Endothelial cell of umbilical vein (primary cell): ENCODE measurements at regions of chr13 and their contacts with region 1.

Region 1: GRCh38 chr13:59391696-59392095 is 772.0 kb downstream of the DIAPH3 start:
- DNase-seq: peak; percentile 78
- H3K4me3 ChIP-seq: no peak overlapping the region
- H3K27ac ChIP-seq: no peak overlapping the region
- H3K4me1 ChIP-seq: peaks cover 15% of the 10 kb centered on the region
- H3K27me3 ChIP-seq: no peaks in the 10 kb centered on the region
- CTCF ChIP-seq: peak; percentile 76
- POLR2A ChIP-seq: no peak

Region 2: DNA sequence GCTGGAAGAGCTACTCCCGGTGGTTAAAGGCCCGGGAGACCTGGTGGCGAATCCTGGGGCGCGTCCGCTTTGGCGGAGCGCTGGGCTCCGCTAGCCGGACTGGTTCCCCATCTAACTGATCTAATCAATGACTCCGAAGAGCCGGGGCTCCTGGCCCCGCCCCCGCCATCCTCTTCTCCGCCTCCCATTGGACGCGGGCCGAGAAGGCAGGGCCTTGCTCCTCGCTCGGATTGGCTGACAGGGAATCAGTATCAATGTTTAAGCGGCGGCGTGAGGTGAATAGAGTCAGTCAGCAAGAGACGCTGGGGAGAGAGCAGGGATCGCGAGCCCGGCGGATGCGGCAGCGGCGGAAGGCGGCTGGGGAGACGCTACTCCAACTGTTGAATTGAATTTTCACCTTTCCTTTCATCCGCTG is 1761.9 kb before region 1 on chr13:
- CTCF ChIA-PET with region 1: no interaction called
- POLR2A ChIA-PET with region 1: no interaction called
- dilution Hi-C with region 1: no loop called
- intact Hi-C with region 1: loop called (anchors 10 kb)
- DNase-seq: peak; percentile 95
- H3K4me3 ChIP-seq: peak overlapping the region; percentile 46 to 75 (median 68)
- H3K27ac ChIP-seq: no peak overlapping the region
- H3K4me1 ChIP-seq: peaks cover 24% of the 10 kb centered on the region
- H3K27me3 ChIP-seq: peaks cover 5 to 11% of the 10 kb centered on the region in 2 experiments
- CTCF ChIP-seq: no peak
- POLR2A ChIP-seq: peak; percentile 84

Region 3: DNA sequence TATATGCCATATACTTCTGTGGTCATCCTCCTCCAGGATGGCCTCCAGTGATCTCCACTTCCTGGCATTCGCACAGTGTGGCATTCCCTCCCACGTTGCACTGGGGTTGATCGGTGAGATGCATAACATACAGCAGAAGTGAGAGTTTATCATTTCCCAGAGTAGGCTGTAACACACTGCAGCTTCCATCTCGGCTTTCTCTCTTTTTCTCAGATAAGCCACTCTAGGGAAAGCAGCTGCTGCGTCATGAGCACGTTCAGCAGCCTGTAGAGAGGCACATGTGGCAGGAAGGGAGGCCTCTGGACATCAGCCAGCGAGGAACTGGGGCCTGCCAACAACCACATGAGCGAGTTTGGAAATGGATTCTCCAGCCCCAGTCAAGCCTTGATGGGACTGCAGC is 35.1 kb before region 1 on chr13:
- CTCF ChIA-PET with region 1: interaction called, 10 read pairs
- POLR2A ChIA-PET with region 1: no interaction called
- dilution Hi-C with region 1: no loop called
- intact Hi-C with region 1: no loop called
- DNase-seq: peak; percentile 97
- H3K4me3 ChIP-seq: no peak overlapping the region
- H3K27ac ChIP-seq: peak overlapping the region; percentile 22
- H3K4me1 ChIP-seq: peaks cover 26% of the 10 kb centered on the region
- H3K27me3 ChIP-seq: peaks cover 0 to 1% of the 10 kb centered on the region in 2 experiments
- CTCF ChIP-seq: no peak
- POLR2A ChIP-seq: peak; percentile 42

Region 4: GRCh38 chr13:59371229-59371628 is 20.5 kb before region 1 on chr13:
- CTCF ChIA-PET with region 1: no interaction called
- POLR2A ChIA-PET with region 1: no interaction called
- dilution Hi-C with region 1: no loop called
- intact Hi-C with region 1: no loop called
- DNase-seq: no peak
- H3K4me3 ChIP-seq: no peak overlapping the region
- H3K27ac ChIP-seq: no peak overlapping the region
- H3K4me1 ChIP-seq: peaks cover 6% of the 10 kb centered on the region
- H3K27me3 ChIP-seq: no peaks in the 10 kb centered on the region
- CTCF ChIP-seq: no peak
- POLR2A ChIP-seq: no peak

Region 5: GRCh38 chr13:59425211-59425721 is 33.6 kb after region 1 on chr13:
- CTCF ChIA-PET with region 1: no interaction called
- POLR2A ChIA-PET with region 1: no interaction called
- dilution Hi-C with region 1: no loop called
- intact Hi-C with region 1: no loop called
- DNase-seq: no peak
- H3K4me3 ChIP-seq: no peak overlapping the region
- H3K27ac ChIP-seq: no peak overlapping the region
- H3K4me1 ChIP-seq: no peaks in the 10 kb centered on the region
- H3K27me3 ChIP-seq: peaks cover 0 to 1% of the 10 kb centered on the region in 2 experiments
- CTCF ChIP-seq: no peak
- POLR2A ChIP-seq: no peak

Region 6: DNA sequence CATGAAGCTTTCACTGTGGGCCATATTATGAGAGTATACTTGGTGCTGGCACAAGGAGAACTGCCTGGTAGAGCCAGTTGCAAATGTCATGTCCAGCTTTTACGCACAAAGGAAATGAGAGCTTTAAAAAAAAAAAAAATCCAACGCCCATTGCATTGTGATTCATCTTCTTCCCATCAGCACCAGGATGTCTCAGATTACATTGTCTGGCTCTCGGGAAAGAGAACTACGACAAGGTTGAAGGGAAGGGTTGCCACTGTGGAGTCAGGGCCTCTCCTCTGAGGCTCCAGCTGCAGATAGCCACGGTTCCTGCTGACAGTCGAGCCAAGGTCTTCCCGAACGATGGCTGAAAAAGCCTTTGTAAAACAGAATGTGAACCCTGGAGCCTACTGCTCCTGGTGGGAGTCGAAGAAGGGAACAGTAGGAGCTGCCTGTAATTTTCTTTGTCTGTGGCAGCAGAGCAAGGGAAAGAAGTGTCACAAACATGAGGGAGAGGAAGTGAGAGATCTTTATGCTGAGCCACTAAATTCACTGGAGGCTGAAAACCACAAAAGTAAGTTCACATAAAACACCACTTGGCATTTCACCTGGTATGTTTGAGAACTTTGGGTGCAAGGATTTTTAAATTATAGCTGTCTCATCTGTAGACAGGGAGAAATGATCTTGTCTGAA is 67.3 kb after region 1 on chr13:
- CTCF ChIA-PET with region 1: interaction called, 10 read pairs
- POLR2A ChIA-PET with region 1: no interaction called
- dilution Hi-C with region 1: no loop called
- intact Hi-C with region 1: loop called (anchors 1 kb)
- DNase-seq: peak; percentile 91
- H3K4me3 ChIP-seq: peak overlapping the region in 1 of 3 experiments; percentile 8
- H3K27ac ChIP-seq: peak overlapping the region; percentile 87
- H3K4me1 ChIP-seq: peaks cover 36% of the 10 kb centered on the region
- H3K27me3 ChIP-seq: no peaks in the 10 kb centered on the region
- CTCF ChIP-seq: no peak
- POLR2A ChIP-seq: no peak

Region 7: DNA sequence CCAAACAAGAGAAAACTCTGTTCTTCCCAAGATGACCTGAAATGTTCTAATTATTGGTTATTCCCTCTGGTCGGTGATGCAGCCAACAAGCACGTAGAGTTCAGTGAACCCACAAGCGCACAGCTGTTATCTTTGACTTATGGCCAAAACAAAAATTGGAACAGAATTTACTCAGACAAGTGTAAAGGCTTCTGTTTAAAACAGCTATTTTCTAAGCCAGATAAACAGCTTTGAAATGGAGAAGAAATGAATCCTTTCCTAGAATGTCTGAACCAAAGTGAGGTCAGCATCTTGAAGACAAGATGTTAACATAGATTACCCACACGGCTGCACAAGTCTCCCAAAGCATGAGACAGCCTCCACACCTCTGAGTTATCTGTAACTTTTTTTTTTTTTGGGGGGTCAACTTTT is 102.9 kb after region 1 on chr13:
- CTCF ChIA-PET with region 1: interaction called, 9 read pairs
- POLR2A ChIA-PET with region 1: no interaction called
- dilution Hi-C with region 1: no loop called
- intact Hi-C with region 1: loop called (anchors 1 kb)
- DNase-seq: peak; percentile 93
- H3K4me3 ChIP-seq: no peak overlapping the region
- H3K27ac ChIP-seq: peak overlapping the region; percentile 75
- H3K4me1 ChIP-seq: peaks cover 70% of the 10 kb centered on the region
- H3K27me3 ChIP-seq: no peaks in the 10 kb centered on the region
- CTCF ChIP-seq: no peak
- POLR2A ChIP-seq: no peak

Region 8: DNA sequence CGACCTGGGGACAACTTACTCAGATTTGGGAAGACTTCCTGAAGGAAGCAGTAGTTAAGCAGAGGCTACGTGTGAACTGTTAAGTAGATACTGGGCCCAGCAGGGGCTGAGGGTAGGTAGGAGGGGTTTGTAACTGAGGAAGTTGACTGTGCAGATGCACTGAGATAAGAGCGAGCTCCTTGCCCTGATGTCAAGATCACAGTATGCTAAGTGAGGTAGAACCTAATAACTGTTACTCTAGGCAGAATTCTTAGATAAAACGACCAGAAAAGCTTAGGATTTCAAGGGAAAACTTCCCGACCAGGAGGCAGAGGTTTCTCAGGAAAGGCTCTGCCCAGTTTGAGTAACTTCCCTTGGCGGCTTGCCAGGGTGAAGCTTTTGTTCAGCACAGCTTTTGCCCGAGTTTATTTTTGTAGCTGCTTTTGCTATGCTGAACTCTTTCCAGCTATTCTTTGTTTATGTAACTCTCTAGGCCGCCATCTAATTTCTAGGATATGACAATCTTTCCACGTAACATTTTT is 139.9 kb after region 1 on chr13:
- CTCF ChIA-PET with region 1: interaction called, 11 read pairs
- POLR2A ChIA-PET with region 1: interaction called, 3 read pairs
- dilution Hi-C with region 1: no loop called
- intact Hi-C with region 1: loop called (anchors 1 kb)
- DNase-seq: peak; percentile 98
- H3K4me3 ChIP-seq: no peak overlapping the region
- H3K27ac ChIP-seq: peak overlapping the region; percentile 73
- H3K4me1 ChIP-seq: peaks cover 40% of the 10 kb centered on the region
- H3K27me3 ChIP-seq: no peaks in the 10 kb centered on the region
- CTCF ChIP-seq: no peak
- POLR2A ChIP-seq: peak; percentile 68

Region 9: DNA sequence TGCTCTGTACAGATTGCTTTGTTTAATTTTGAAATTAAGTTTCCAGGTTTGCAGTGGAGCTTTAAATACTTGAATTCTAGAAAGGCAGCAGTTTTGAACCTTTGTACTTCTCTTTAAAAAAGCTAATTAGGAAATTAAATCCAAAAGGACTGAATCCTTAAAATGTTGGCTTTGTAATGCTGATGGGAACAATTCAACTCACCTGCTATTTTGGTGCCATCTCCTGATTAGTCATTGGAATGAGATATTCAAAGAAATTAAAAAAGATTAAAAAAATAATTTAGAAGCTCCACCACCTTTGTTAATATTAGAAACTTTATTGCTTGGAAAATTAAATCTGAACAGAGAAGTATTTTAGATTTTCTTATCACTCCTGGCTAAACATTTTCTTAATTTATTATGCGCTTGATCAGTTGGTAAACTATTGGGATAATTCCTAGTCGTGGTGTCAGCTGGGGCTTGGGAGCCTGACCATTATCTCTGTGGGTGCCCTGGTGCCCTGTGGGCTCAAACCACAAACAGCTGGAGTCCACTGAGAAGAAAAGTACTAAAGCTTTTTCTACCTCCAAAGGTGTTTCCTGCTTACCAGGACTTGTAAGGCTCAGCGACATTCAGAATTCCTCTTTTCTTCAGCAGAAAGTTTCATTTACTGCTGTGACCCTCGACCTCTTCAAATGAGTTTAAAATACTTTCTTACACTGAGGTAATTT is 231.7 kb after region 1 on chr13:
- CTCF ChIA-PET with region 1: no interaction called
- POLR2A ChIA-PET with region 1: no interaction called
- dilution Hi-C with region 1: no loop called
- intact Hi-C with region 1: no loop called
- DNase-seq: no peak
- H3K4me3 ChIP-seq: no peak overlapping the region
- H3K27ac ChIP-seq: no peak overlapping the region
- H3K4me1 ChIP-seq: no peaks in the 10 kb centered on the region
- H3K27me3 ChIP-seq: no peaks in the 10 kb centered on the region
- CTCF ChIP-seq: no peak
- POLR2A ChIP-seq: no peak

Region 10: GRCh38 chr13:59906413-59907049 is 514.8 kb after region 1 on chr13:
- CTCF ChIA-PET with region 1: interaction called, 11 read pairs
- POLR2A ChIA-PET with region 1: no interaction called
- dilution Hi-C with region 1: no loop called
- intact Hi-C with region 1: loop called (anchors 1 kb)
- DNase-seq: peak; percentile 47
- H3K4me3 ChIP-seq: no peak overlapping the region
- H3K27ac ChIP-seq: no peak overlapping the region
- H3K4me1 ChIP-seq: peaks cover 2% of the 10 kb centered on the region
- H3K27me3 ChIP-seq: no peaks in the 10 kb centered on the region
- CTCF ChIP-seq: peak; percentile 24 to 37
- POLR2A ChIP-seq: no peak